ENCODE measurements at regions of chrX and their contacts with region 1.

Region 1: GRCh38 chrX:131633285-131633917 is 89.5 kb downstream of the OR13H1 start:
- DNase-seq: peak; percentile 29
- H3K4me3 ChIP-seq: no peak overlapping the region
- H3K27ac ChIP-seq: no peak overlapping the region
- H3K4me1 ChIP-seq: no peaks in the 10 kb centered on the region
- H3K27me3 ChIP-seq: no peaks in the 10 kb centered on the region
- CTCF ChIP-seq: peak; percentile 26 to 51 (median 37)
- POLR2A ChIP-seq: no peak

Region 2: DNA sequence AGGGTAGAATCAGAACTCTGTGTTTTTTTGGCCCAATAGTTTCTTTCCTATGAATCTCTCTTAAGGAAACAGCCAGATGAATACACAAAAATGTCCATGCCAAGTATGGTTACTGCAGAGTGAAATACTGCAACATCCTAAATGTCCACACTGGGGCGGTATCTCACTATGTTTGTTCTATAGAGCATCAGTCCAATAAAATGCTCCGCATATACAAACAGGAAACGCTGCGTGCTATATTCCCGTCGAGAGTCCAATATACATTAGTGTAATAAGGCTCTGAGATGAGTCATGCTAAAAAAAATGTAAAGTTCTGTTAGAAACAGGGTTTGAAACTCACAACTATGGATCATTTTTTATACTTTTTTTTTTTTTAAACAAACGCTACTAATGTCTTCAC is 657.5 kb before region 1 on chrX:
- intact Hi-C with region 1: loop called (anchors 5 kb)
- DNase-seq: peak; percentile 27
- H3K4me3 ChIP-seq: no peak overlapping the region
- H3K27ac ChIP-seq: no peak overlapping the region
- H3K4me1 ChIP-seq: no peaks in the 10 kb centered on the region
- H3K27me3 ChIP-seq: no peaks in the 10 kb centered on the region
- CTCF ChIP-seq: peak in 3 of 4 experiments; percentile 30 to 62 (median 50)
- POLR2A ChIP-seq: no peak

Region 3: DNA sequence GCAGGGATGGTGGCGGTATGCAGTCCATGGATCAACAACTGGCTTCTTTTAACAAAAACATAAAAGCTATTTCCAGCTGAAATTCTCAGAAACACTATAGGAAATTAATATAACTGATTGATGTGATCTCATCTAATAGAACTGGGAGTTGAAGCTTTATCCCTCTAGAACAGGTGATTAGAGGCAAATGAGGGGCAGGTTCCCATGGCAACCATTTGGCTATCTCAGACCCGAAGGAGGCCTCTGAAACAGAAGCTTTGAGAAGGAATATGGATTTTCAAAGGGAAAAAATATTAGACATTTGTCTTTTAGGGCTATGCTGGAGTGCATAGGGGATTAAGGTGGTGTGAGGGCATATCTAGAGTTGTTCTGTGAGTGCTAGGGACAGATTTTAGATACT is 394.3 kb before region 1 on chrX:
- intact Hi-C with region 1: no loop called
- DNase-seq: no peak
- H3K4me3 ChIP-seq: no peak overlapping the region
- H3K27ac ChIP-seq: no peak overlapping the region
- H3K4me1 ChIP-seq: no peaks in the 10 kb centered on the region
- H3K27me3 ChIP-seq: no peaks in the 10 kb centered on the region
- CTCF ChIP-seq: no peak
- POLR2A ChIP-seq: no peak

Region 4: DNA sequence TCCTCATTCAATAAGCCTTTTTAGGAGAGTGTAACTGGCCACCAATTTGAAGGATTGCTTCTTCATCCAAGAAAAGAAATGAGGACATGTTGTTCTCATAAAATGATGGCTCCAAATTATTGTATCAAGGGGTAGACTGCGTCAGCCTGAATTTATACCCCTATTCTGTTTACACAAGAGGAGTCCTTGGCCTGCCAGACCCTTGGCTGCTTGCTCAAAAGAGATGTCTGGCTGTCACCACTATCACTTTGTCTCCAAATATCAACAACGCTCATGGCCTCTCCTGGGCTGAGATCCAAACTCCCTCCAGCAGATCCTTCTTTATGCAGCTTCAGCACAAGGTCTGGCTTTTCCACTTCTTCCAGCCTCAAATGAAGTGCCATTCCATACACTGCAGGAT is 38.3 kb after region 1 on chrX:
- intact Hi-C with region 1: loop called (anchors 5 kb)
- DNase-seq: peak; percentile 63
- H3K4me3 ChIP-seq: no peak overlapping the region
- H3K27ac ChIP-seq: no peak overlapping the region
- H3K4me1 ChIP-seq: no peaks in the 10 kb centered on the region
- H3K27me3 ChIP-seq: no peaks in the 10 kb centered on the region
- CTCF ChIP-seq: no peak
- POLR2A ChIP-seq: no peak